ENCODE measurements at regions of chr2 and their contacts with region 1.

Region 1: DNA sequence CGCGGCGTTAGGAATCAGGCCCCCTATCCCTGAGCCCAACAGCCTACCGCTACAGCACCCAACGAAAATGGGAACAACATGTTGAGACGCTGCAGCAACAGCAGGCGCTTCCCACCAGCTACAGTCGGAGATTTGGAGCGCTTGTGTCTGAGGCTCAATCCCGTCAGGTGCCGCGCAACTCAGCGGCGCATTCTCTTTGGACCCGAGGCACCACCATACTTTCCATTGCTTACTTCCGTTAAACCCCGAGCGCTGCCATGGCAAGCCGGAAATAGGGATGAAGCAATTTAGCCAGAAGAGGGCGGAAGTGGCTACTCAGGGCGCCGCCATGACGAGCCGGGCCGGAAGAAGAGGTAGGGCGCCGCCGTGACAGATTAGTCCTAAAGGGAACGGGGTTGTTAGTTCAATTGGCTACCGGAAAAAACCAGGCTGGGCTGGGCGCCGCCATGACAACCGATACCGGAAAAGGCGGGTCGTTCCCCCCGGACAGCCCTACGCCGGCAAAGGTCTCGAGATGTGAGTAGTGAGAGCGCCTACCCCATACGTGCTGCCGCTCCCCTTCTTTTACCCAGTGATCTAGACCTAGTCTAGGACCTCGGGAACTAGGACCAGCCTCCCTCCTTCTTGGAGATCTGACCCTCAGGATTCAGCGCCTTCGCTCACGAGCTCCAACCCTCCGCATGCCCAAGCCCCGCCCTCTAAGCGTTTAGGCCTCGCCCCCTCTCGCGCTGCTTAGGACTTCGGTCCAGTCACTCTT is at the start of gene CHCHD5:
- DNase-seq: peak; percentile 96
- ATAC-seq: peak; percentile 89
- H3K4me3 Mint-ChIP-seq: peak within 1 kb of the TSS; percentile 95
- H3K27ac Mint-ChIP-seq: peak within 1 kb of the TSS; percentile 93
- H3K4me1 Mint-ChIP-seq: peaks cover 28% of the 10 kb centered on the region
- H3K27me3 Mint-ChIP-seq: no peaks in the 10 kb centered on the region
- total RNA-seq, gene CHCHD5: 34.4 to 37.0 TPM

Region 2: GRCh38 chr2:112187805-112188596 is 396.3 kb before region 1 on chr2:
- CTCF ChIA-PET with region 1: no interaction called
- POLR2A ChIA-PET with region 1: no interaction called
- intact Hi-C with region 1: loop called in 1 of 2 experiments (anchors 1 kb)
- DNase-seq: peak; percentile 90
- ATAC-seq: peak; percentile 86
- H3K4me3 Mint-ChIP-seq: peak overlapping the region; percentile 62
- H3K27ac Mint-ChIP-seq: peak overlapping the region; percentile 96
- H3K4me1 Mint-ChIP-seq: peaks cover 90% of the 10 kb centered on the region
- H3K27me3 Mint-ChIP-seq: no peaks in the 10 kb centered on the region

Region 3: GRCh38 chr2:112259509-112260294 is 324.6 kb before region 1 on chr2:
- CTCF ChIA-PET with region 1: no interaction called
- POLR2A ChIA-PET with region 1: no interaction called
- intact Hi-C with region 1: loop called (anchors 1 to 5 kb)
- DNase-seq: peak; percentile 92
- ATAC-seq: peak; percentile 49
- H3K4me3 Mint-ChIP-seq: peak overlapping the region; percentile 16
- H3K27ac Mint-ChIP-seq: peak overlapping the region; percentile 76
- H3K4me1 Mint-ChIP-seq: peaks cover 22% of the 10 kb centered on the region
- H3K27me3 Mint-ChIP-seq: peaks cover 1% of the 10 kb centered on the region

Region 4: DNA sequence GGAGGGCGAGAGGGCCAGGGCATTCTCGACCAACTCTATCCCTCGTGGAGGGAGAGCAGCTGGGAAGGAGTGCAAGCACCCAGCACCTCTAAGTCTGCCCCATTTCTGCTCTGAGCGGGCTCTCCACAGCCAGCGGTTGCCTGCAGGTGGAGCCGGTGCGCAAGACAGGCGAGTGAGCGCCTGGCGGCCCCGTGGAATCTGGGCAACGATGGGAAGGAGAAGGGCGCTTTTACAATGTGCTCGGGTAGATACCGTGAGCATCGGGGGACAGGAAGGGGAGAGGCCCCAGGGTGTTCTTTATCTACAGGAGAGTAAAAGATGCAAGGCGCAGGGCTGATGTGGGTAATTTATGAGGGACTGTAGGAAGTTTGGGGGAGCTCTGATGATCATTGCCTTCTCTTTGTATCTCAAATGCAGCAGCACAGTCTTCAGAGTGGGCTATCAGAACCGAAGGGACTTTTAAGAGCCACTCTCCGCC is 103.2 kb before region 1 on chr2:
- CTCF ChIA-PET with region 1: interaction called, 4 read pairs
- POLR2A ChIA-PET with region 1: interaction called, 3 read pairs
- intact Hi-C with region 1: loop called (anchors 1 kb)
- DNase-seq: peak; percentile 93
- ATAC-seq: peak; percentile 88
- H3K4me3 Mint-ChIP-seq: peak overlapping the region; percentile 81
- H3K27ac Mint-ChIP-seq: peak overlapping the region; percentile 85
- H3K4me1 Mint-ChIP-seq: peaks cover 32% of the 10 kb centered on the region
- H3K27me3 Mint-ChIP-seq: no peaks in the 10 kb centered on the region

Region 5: GRCh38 chr2:112614201-112614840 is 30.0 kb after region 1 on chr2:
- CTCF ChIA-PET with region 1: no interaction called
- POLR2A ChIA-PET with region 1: no interaction called
- intact Hi-C with region 1: no loop called
- DNase-seq: no peak
- ATAC-seq: no peak
- H3K4me3 Mint-ChIP-seq: no peak overlapping the region
- H3K27ac Mint-ChIP-seq: no peak overlapping the region
- H3K4me1 Mint-ChIP-seq: no peaks in the 10 kb centered on the region
- H3K27me3 Mint-ChIP-seq: no peaks in the 10 kb centered on the region

Region 6: GRCh38 chr2:112626604-112627059 is 42.3 kb after region 1 on chr2:
- CTCF ChIA-PET with region 1: interaction called, 5 read pairs
- POLR2A ChIA-PET with region 1: interaction called, 3 read pairs
- intact Hi-C with region 1: loop called in 1 of 2 experiments (anchors 1 kb)
- DNase-seq: peak; percentile 81
- ATAC-seq: peak; percentile 53
- H3K4me3 Mint-ChIP-seq: peak overlapping the region; percentile 50
- H3K27ac Mint-ChIP-seq: peak overlapping the region; percentile 82
- H3K4me1 Mint-ChIP-seq: peaks cover 65% of the 10 kb centered on the region
- H3K27me3 Mint-ChIP-seq: peaks cover 2% of the 10 kb centered on the region